Heart left ventricle (tissue), 16 donors: ENCODE measurements at regions of chr14 and their contacts with region 1.

Region 1: DNA sequence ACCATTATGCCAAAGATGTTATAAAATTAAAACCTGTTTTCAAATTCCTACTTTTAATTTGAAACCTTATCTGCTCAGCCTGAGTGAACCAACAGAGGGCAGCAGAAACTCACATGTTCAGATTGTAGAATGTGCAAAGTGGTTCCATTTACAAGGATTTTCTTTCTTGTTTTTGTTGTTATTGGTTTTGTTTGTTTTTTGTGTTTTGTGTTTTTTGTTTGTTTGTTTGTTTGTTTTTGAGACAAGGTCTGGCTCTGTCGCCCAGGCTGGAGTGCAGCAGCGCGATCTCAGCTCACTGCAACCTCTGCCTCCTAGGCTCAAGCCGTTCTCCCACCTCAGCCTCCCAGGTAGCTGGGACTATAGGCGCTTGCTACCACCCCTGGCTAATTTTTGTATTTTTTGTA is 22.8 kb upstream of the GARIN2 start:
- DNase-seq: no peak
- ATAC-seq: no peak
- H3K4me3 ChIP-seq: no peak overlapping the region
- H3K27ac ChIP-seq: no peak overlapping the region
- H3K4me1 ChIP-seq: no peaks in the 10 kb centered on the region
- H3K27me3 ChIP-seq: no peaks in the 10 kb centered on the region
- CTCF ChIP-seq: peak; percentile 56 to 89 (median 72)
- POLR2A ChIP-seq: no peak

Region 2: DNA sequence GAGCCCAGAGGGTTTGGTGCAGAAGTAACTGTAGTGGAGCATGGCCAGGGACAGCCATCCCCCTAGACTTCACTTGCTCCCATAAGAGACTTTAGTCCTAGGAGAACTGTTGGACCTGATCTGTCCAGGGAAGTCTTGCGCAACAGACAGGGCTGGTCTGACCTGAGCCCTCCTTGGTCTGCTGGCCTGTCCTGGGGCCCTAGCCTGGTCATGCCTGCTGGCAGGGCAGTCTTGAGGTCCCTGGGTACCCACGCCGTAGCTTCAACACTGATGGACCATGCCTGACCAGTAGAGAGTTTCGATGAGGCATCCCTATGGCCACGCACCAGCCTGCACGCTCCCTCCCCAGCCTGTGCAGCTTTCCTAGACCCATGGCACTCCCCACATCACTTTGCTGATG is 352.8 kb before region 1 on chr14:
- intact Hi-C with region 1: loop called in 1 of 10 experiments (anchors 5 kb)
- DNase-seq: no peak
- ATAC-seq: peak in 1 of 4 donors; percentile 20
- H3K4me3 ChIP-seq: no peak overlapping the region
- H3K27ac ChIP-seq: no peak overlapping the region
- H3K4me1 ChIP-seq: peaks cover 0 to 5% (median 0%) of the 10 kb centered on the region in 12 donors
- H3K27me3 ChIP-seq: no peaks in the 10 kb centered on the region
- CTCF ChIP-seq: no peak
- POLR2A ChIP-seq: no peak

Region 3: DNA sequence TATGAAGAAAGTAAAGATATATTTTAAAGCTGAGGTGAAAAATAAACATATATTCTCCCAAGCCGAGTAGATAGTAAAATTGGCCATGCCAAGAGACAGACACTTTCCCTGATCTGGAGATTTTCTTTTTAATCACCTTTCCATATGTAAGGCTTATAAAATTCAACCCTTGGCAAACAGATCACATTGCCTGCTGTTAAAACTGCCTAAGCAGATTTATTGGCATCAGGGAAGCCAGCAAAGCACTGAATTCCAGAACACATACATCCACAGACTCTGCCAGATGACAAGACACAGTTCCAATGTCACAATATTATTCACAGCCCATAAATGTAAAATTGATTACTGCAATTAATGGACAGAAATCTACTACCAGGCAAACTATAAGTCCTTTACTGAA is 55.4 kb before region 1 on chr14:
- intact Hi-C with region 1: no loop called
- DNase-seq: no peak
- ATAC-seq: no peak
- H3K4me3 ChIP-seq: no peak overlapping the region
- H3K27ac ChIP-seq: no peak overlapping the region
- H3K4me1 ChIP-seq: no peaks in the 10 kb centered on the region
- H3K27me3 ChIP-seq: no peaks in the 10 kb centered on the region
- CTCF ChIP-seq: no peak
- POLR2A ChIP-seq: no peak

Region 4: DNA sequence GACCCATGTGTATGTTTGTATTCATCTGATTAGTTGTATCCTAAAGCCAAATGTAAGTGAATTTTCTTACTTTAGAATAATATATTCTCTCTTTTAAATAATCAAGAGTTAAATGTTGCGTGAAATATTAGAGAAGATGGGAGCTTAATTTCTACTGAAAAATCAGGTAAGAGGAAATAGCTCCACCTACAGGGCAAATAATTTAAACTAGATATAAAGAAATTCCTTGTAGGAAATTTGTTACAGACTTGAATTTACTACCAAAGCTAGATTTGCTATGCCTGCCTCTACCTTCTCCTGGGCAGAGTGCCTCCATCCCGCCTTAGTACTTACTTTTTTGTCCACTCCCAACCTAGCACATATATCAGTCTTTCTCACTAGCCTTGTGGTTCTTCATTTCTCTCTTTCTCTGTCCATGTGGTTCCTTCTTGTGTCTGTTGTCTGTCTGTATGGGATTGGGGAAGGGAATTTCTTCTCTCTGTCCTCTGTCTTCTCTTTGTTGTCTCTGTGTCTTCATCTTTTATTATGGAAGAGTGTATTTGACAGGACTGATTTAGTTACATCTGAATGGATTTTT is 119.5 kb after region 1 on chr14:
- intact Hi-C with region 1: loop called (anchors 1 to 2 kb)
- DNase-seq: no peak
- ATAC-seq: no peak
- H3K4me3 ChIP-seq: no peak overlapping the region
- H3K27ac ChIP-seq: no peak overlapping the region
- H3K4me1 ChIP-seq: no peaks in the 10 kb centered on the region
- H3K27me3 ChIP-seq: no peaks in the 10 kb centered on the region
- CTCF ChIP-seq: peak; percentile 50 to 78 (median 62)
- POLR2A ChIP-seq: no peak